Mammary epithelial cell (primary cell): ENCODE measurements at regions of chr14 and their contacts with region 1.

Region 1: DNA sequence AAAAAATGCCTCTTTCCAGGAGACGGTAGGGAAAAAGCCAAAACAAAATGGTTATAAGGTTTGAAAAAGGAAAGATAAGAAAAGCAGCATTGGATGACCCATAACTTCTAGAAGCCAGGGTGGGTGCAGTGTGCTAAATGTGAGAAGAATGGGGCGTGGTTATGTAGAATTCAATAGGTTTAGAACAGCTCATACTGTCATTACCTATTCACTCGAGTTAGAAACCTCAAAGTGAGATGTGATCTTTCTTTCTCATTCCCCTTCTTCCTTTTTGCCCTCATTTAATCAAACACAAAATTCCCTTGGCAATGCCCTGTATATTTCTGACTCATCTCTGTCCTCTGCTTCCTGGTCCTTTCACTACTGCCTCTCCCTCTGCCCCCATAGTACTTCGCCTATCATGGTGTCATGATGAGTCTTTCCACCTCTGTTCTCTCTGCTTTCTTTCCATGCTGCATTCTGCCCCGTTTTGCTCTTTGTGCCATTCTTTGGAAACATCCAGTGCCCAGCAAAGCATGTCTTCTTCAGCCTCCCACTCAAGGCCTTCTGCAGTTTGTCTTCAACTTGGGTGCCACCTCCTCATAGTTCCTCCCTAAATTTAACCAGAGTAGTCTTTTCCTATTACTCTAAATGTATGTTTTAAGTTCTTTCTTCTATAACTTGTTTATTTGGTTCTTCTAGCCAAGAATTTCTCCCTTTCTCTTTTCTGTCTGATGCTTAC is 496.3 kb downstream of the NRXN3 start:
- DNase-seq: no peak
- H3K4me3 ChIP-seq: no peak overlapping the region
- H3K27ac ChIP-seq: no peak overlapping the region
- H3K4me1 ChIP-seq: no peaks in the 10 kb centered on the region
- H3K27me3 ChIP-seq: no peaks in the 10 kb centered on the region
- CTCF ChIP-seq: no peak

Region 2: DNA sequence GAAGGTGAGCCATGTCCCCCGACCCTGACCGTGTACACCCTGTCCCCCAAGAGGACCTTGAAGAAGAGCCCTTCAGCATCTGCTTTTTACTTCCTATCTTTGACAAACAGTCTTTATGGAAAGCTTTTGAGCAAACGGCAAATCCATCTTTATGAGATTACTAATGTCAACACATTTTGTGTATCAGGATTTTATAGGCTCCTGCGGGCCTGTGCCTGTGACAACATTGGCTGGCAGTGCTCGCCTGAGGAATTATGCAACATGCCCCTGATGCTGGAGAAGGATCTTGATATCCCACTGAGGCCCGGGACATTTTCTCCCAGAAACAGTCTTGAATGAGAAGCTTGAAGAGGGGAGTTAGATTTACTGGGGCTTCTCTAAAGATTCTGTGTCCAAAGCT is 79.8 kb before region 1 on chr14:
- CTCF ChIA-PET with region 1: no interaction called
- dilution Hi-C with region 1: loop called (anchors 5 kb)
- in situ Hi-C with region 1: no loop called
- intact Hi-C with region 1: no loop called
- DNase-seq: no peak
- H3K4me3 ChIP-seq: no peak overlapping the region
- H3K27ac ChIP-seq: no peak overlapping the region
- H3K4me1 ChIP-seq: no peaks in the 10 kb centered on the region
- H3K27me3 ChIP-seq: no peaks in the 10 kb centered on the region
- CTCF ChIP-seq: no peak